ENCODE measurements at regions of chr15 and their contacts with region 1.

Region 1: GRCh38 chr15:44654858-44655257 is 8.6 kb downstream of the SPG11 start:
- DNase-seq: no peak
- CTCF ChIP-seq: no peak

Region 2: DNA sequence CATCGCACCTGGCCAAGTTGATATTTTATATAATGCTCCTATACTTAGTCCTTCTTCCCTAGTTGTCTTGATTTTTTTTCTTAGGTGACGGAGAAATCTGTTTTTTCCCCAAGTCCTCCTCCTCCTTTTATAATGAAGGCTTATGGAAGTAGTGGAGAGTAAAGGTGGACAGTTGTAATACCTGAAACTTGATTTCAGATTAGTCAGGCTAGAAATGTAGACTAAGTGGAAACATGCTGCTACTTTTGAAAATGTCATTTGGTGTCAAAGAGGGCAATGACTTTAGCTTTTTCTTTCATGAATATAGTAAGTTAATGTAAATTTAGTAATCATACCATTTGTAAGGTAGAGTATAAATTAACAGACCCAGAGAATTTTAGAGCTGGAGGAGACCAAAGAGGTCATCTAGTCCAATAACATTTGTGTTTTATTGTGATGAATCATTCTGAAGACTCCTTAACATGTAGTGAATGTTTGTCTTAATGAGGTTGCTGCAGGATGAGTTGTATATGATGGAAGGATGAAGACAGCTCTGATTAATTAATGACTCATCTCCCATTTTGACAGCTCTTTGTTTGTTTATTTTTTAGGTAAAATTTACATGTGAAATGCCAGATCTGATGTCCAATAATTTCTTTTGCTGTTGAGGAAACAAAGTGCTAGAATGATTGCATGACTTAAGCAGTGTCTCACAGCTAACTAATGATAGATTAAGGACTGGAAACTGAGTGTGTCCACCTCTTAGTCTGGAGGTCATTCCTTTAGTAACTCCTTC is 218.8 kb before region 1 on chr15:
- CTCF ChIA-PET with region 1: no interaction called
- POLR2A ChIA-PET with region 1: no interaction called
- DNase-seq: no peak
- CTCF ChIP-seq: no peak

Region 3: DNA sequence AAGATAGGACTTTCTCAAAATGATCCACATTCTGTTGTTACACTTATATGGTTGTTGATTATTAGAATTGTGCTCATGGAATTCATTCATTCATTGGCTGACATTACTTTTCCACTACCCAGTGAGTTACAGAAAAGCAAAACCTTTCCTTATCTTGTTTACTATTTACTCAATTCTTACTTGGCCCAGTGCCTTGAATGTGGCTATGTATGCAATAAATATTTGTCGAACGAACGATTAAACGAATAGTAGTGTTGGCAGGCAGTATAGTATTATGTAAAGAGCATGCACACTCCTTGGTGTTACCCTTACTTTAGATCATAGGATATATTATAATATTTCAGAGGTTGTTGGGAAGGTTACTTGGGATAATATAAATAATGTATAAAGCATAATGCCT is 196.4 kb before region 1 on chr15:
- CTCF ChIA-PET with region 1: no interaction called
- POLR2A ChIA-PET with region 1: interaction called, 12 read pairs
- DNase-seq: no peak
- CTCF ChIP-seq: no peak

Measured in GM10248 (cell line).